ENCODE measurements at regions of chr15 and their contacts with region 1.

Region 1: DNA sequence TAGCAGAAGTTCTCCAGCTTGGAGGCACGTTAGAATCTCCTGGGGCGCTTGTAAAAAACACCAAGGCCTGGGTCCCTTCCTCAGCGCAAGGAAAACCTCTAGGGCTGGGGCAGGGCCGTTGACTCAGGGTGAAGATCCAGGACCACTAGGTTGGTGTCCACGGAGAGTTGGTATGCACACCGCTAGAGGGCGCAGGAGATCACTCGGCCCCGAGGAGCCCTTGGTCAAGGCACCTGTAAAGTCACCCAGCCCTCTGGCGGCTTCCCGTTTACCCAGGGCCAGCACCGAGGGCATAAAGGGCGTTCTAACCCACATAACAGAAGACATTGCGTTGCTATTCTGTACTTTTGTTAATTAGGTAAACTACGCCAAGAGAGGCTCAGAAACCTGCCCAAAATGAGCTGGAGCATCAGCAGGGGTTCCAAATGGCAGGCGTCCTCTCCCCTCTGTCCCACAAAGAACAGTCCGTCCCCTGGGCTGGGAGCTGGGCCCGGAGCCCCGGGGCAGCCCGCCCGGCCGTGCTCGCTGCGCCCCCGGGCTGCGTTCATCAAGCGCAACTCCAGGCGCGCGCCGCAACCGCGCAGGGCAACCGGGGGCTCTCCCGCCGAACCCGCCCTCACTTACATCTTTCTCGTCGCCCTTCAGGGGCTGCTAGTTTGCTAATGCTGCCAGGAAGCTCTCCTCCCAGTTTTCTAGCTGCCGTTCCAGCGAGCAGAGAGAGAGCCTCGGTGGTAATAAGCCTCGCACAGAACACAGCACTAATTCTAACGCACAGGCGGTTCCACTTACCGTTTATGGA is 332.1 kb downstream of the ARRDC4 start:
- DNase-seq: peak; percentile 27
- ATAC-seq: peak; percentile 98
- H3K4me3 ChIP-seq: no peak overlapping the region
- H3K27ac ChIP-seq: no peak overlapping the region
- H3K4me1 ChIP-seq: no peaks in the 10 kb centered on the region
- H3K27me3 ChIP-seq: peaks cover 5 to 27% of the 10 kb centered on the region in 2 experiments
- CTCF ChIP-seq: peak; percentile 79
- EP300 ChIP-seq: no peak
- POLR2A ChIP-seq: no peak
- RAD21 ChIP-seq: no peak

Region 2: DNA sequence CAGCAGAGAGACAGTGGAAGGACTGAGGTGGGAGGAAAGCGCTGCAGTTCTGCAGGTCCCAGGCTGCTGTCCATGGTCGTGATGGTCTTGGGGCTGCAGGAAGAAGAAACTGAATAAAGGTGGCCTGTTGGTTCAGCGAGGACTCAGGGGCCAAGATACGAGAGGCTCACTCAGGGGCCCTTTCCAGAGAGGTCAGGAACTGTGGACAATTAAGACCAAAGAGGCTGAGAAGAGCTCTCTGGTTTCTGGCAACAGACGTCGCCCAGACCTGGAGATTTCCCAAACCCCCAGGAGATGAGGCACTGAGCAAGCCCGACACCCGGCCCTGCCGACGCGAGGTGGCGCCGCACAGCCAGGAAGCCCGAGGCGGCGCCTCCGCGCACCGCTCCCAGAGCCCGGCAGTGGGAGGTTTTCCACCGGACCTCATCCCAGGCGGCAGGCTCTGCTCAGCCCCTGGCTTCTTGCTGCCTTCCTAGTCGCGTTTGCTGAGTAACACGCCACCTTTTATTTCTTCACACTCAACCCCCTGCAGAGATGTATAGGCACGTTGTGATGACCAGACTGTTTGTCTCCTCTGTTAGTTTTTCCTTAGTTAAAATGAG is 388.6 kb before region 1 on chr15:
- CTCF ChIA-PET with region 1: interaction called, 7 read pairs
- POLR2A ChIA-PET with region 1: no interaction called
- in situ Hi-C with region 1: loop called (anchors 10 kb)
- intact Hi-C with region 1: loop called (anchors 1 kb)
- DNase-seq: peak; percentile 34
- ATAC-seq: peak; percentile 100
- H3K4me3 ChIP-seq: no peak overlapping the region
- H3K27ac ChIP-seq: no peak overlapping the region
- H3K4me1 ChIP-seq: no peaks in the 10 kb centered on the region; the same call in 1 of the 2 replicates
- H3K27me3 ChIP-seq: peaks cover 0 to 14% of the 10 kb centered on the region in 2 experiments; a peak in 2 of 5 replicates
- CTCF ChIP-seq: peak; percentile 87
- EP300 ChIP-seq: no peak
- POLR2A ChIP-seq: no peak
- RAD21 ChIP-seq: peak; percentile 88

Region 3: DNA sequence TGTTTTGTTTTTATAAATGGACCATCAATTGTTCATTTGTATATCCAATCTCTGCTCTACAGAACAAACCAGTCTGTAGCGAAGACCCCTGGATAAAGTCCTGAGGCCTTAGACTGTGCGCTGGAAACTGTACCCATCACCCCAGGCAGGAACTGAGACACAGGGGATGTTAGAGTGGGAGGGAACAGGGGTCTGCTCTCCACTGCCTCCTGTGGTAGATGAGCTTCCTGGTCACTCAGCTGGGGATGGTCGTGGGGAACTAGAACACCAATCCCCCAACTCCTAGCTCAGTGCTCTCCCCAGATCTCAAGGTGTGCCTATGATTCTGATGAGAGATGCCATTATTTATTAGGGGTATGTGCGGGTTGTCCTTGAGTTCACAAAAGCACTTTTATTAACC is 15.5 kb after region 1 on chr15:
- CTCF ChIA-PET with region 1: no interaction called
- POLR2A ChIA-PET with region 1: no interaction called
- in situ Hi-C with region 1: no loop called
- intact Hi-C with region 1: no loop called
- DNase-seq: no peak
- ATAC-seq: peak; percentile 46
- H3K4me3 ChIP-seq: no peak overlapping the region
- H3K27ac ChIP-seq: no peak overlapping the region
- H3K4me1 ChIP-seq: no peaks in the 10 kb centered on the region
- H3K27me3 ChIP-seq: peaks cover 0 to 25% of the 10 kb centered on the region in 2 experiments; a peak in 2 of 5 replicates
- CTCF ChIP-seq: no peak
- EP300 ChIP-seq: no peak
- POLR2A ChIP-seq: no peak
- RAD21 ChIP-seq: no peak

Region 4: GRCh38 chr15:98330692-98331435 is 38.2 kb after region 1 on chr15:
- CTCF ChIA-PET with region 1: no interaction called
- POLR2A ChIA-PET with region 1: no interaction called
- in situ Hi-C with region 1: no loop called
- intact Hi-C with region 1: no loop called
- DNase-seq: no peak
- ATAC-seq: no peak
- H3K4me3 ChIP-seq: no peak overlapping the region
- H3K27ac ChIP-seq: no peak overlapping the region
- H3K4me1 ChIP-seq: peaks cover 11% of the 10 kb centered on the region
- H3K27me3 ChIP-seq: peaks cover 0 to 4% of the 10 kb centered on the region in 2 experiments; a peak in 1 of 5 replicates
- CTCF ChIP-seq: no peak
- EP300 ChIP-seq: no peak
- POLR2A ChIP-seq: no peak
- RAD21 ChIP-seq: no peak

Region 5: DNA sequence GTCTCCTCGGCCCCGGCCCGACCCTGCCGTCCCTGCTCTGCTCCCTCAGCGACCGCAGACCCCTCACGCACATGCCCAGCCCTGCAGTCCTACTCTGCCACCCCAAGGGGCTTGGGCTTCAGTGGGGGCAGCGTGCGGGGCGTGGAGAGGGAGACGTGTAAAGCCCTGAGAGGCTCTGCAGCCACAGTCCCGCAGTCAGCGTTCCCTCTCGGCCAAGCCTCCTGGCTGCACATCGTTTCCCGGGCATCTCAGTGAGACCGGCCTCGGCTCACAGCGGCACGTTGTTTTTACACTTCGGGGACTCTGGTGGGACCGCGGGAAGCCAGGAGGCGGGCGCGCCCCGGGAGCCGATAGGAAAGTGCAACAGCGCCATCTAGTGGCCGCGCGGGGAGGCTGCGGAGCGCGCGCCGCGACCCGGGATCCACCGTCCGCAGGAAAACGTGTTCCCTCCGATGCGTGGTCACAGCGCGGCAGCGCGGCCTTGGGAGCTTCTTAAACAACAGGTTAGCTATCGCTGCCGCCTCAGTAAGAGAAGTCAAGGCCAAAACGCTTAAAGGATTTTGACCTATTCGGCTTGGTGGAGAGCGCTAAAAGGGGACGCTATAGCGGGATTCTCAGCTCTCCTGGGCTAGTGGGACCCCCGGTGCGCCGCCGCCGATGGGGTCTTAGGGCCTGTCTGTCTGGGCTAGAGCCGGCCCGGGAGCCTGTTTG is 128.9 kb after region 1 on chr15:
- CTCF ChIA-PET with region 1: interaction called, 7 read pairs
- POLR2A ChIA-PET with region 1: no interaction called
- in situ Hi-C with region 1: no loop called
- intact Hi-C with region 1: loop called (anchors 1 kb)
- DNase-seq: peak; percentile 11
- ATAC-seq: peak; percentile 90
- H3K4me3 ChIP-seq: no peak overlapping the region
- H3K27ac ChIP-seq: no peak overlapping the region
- H3K4me1 ChIP-seq: no peaks in the 10 kb centered on the region
- H3K27me3 ChIP-seq: peaks cover 7 to 42% of the 10 kb centered on the region in 2 experiments; a peak in 4 of 5 replicates
- CTCF ChIP-seq: peak; percentile 96
- EP300 ChIP-seq: no peak
- POLR2A ChIP-seq: no peak
- RAD21 ChIP-seq: peak; percentile 97